A549 (cell line): ENCODE measurements at regions of chr17 and their contacts with region 1.

Region 1: GRCh38 chr17:60392042-60392844 is at the start of gene USP32:
- DNase-seq: peak; percentile 96 to 99
- ATAC-seq: peak; percentile 92 to 94
- H3K4me3 ChIP-seq: peak within 1 kb of the TSS; percentile 91
- H3K27ac ChIP-seq: peak within 1 kb of the TSS; percentile 96
- H3K4me1 ChIP-seq: peaks cover 24% of the 10 kb centered on the region
- CTCF ChIP-seq: no peak
- EP300 ChIP-seq: peak in 1 of 2 experiments; percentile 31; a peak in 1 of 5 replicates
- POLR2A ChIP-seq: peak; percentile 76
- RAD21 ChIP-seq: no peak; a peak in 1 of 5 replicates
- polyA plus RNA-seq, gene USP32: 52.2 and 70.6 TPM in 2 replicates

Region 2: DNA sequence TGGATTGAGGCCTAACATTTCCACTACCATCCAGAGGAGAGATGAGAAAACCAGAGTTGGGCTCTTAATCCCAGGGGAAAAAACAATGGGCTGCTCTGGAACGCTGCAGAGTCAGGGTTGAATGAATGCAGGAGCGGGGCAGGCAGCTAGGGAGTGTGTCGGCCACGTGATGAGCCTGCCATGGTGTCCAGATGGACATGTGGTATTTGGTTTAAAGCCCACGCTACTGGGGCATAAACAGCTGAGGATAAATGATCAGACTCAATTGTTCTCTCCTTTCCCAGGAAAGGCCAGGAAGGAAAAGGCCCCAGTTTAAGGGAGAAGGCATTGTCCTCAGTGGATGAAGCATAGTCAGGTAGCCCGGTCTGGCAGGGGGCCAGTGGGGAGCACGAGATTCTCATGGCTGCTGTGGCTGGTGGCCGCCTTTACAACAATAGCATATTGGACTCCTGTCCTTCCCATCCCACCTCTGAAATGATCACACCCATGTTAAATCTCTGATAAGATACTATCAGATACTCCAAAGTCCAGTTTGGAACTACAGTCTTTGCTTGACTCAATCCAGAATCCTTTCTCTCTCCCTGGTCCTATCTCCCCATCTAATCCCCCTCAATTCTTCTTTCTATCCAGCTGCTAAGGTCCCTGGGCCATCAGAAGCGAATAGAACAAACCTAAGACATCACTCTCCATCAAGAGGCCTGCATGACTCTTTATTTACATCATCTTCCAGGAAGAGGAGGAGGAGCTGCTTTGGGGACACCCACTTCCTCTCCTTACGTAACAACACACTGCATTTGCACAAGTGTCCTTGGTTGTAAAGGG is 222.1 kb before region 1 on chr17:
- CTCF ChIA-PET with region 1: no interaction called
- POLR2A ChIA-PET with region 1: no interaction called
- DNase-seq: no peak
- ATAC-seq: no peak
- H3K4me3 ChIP-seq: no peak overlapping the region
- H3K27ac ChIP-seq: peak overlapping the region in 1 of 2 experiments; percentile 25; a peak in 1 of 6 replicates
- H3K4me1 ChIP-seq: peaks cover 33% of the 10 kb centered on the region
- CTCF ChIP-seq: no peak
- EP300 ChIP-seq: no peak
- POLR2A ChIP-seq: no peak
- RAD21 ChIP-seq: no peak

Region 3: GRCh38 chr17:60231234-60231633 is 161.0 kb before region 1 on chr17:
- CTCF ChIA-PET with region 1: interaction called, 4 read pairs
- POLR2A ChIA-PET with region 1: interaction called, 10 read pairs
- DNase-seq: peak; percentile 41 to 44
- ATAC-seq: peak; percentile 88 to 92
- H3K4me3 ChIP-seq: no peak overlapping the region
- H3K27ac ChIP-seq: no peak overlapping the region
- H3K4me1 ChIP-seq: peaks cover 6% of the 10 kb centered on the region; the same call in 1 of the 3 replicates
- CTCF ChIP-seq: peak; percentile 68
- EP300 ChIP-seq: no peak
- POLR2A ChIP-seq: no peak
- RAD21 ChIP-seq: peak; percentile 68 to 72

Region 4: GRCh38 chr17:60372790-60373483 is 19.3 kb before region 1 on chr17:
- CTCF ChIA-PET with region 1: interaction called, 5 read pairs
- POLR2A ChIA-PET with region 1: interaction called, 16 read pairs
- DNase-seq: peak; percentile 45 to 48
- ATAC-seq: peak; percentile 98 to 99
- H3K4me3 ChIP-seq: no peak overlapping the region
- H3K27ac ChIP-seq: peak overlapping the region in 1 of 2 experiments; percentile 57; a peak in 2 of 6 replicates
- H3K4me1 ChIP-seq: peaks cover 21% of the 10 kb centered on the region
- CTCF ChIP-seq: no peak
- EP300 ChIP-seq: no peak
- POLR2A ChIP-seq: no peak
- RAD21 ChIP-seq: no peak